H1 (cell line): ENCODE measurements at regions of chr5 and their contacts with region 1.

Region 1: DNA sequence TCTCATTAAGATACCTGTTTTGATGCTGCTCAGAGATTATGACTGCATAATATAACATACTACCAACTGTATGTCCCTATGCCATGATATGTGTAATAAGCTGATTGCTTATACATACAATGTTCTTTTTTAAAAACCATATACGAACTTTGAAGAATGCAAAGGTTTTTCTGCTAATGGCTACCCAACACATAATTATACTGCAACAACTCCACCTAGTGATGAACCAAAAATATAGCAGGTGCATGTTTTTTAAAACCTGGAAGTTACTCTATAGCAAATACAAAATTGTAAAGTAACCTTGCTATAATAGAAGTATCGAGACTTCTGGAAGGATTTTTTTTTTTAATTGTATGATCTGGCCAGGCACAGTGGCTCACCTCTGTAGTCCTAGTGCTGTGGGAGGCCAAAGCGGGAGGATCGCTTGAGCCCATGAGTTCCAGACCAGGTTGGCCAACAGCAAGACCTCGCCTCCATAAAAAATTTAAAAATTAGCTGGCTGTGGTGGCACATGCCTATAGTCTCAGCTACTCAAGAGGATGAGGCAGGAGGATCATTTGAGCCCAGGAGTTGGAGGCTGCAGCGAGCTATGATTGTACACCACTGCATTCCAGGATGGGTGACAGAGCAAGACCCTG is 49.1 kb downstream of the HOMER1 start:
- DNase-seq: no peak
- H3K4me3 ChIP-seq: no peak overlapping the region
- H3K27ac ChIP-seq: no peak overlapping the region
- H3K4me1 ChIP-seq: peaks cover 0 to 7% (median 2%) of the 10 kb centered on the region in 4 experiments; a peak in 4 of 7 replicates
- H3K27me3 ChIP-seq: no peaks in the 10 kb centered on the region
- CTCF ChIP-seq: peak in 2 of 3 experiments; percentile 29 to 50; a peak in 2 of 4 replicates
- EP300 ChIP-seq: no peak
- POLR2A ChIP-seq: no peak
- RAD21 ChIP-seq: peak; percentile 67 to 71

Region 2: DNA sequence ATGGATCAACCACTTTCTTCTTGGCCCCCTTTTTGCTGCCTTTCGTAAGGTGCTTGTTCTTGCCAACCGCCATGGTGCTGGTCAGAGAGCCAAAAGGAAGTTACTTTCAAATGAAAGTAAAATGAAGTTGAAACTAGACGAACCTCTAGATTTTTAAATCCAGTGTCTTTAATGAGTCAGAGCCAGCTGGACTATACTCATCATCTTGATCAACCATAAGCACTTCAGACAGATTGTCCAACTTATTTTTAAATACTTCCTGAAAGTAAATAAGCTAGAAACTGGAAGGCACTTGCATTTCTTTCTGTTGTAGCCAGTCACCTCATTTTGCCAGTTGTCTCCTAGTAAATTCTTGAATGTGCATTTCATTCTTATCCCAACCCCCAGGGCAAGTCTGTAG is 180.0 kb before region 1 on chr5:
- CTCF ChIA-PET with region 1: no interaction called
- POLR2A ChIA-PET with region 1: no interaction called
- DNase-seq: no peak
- H3K4me3 ChIP-seq: no peak overlapping the region
- H3K27ac ChIP-seq: no peak overlapping the region
- H3K4me1 ChIP-seq: no peaks in the 10 kb centered on the region
- H3K27me3 ChIP-seq: no peaks in the 10 kb centered on the region
- CTCF ChIP-seq: no peak
- EP300 ChIP-seq: no peak
- POLR2A ChIP-seq: no peak
- RAD21 ChIP-seq: no peak

Region 3: GRCh38 chr5:79448336-79448735 is 16.5 kb before region 1 on chr5:
- CTCF ChIA-PET with region 1: interaction called, 15 read pairs
- POLR2A ChIA-PET with region 1: interaction called, 4 read pairs
- DNase-seq: no peak
- H3K4me3 ChIP-seq: no peak overlapping the region
- H3K27ac ChIP-seq: no peak overlapping the region
- H3K4me1 ChIP-seq: no peaks in the 10 kb centered on the region
- H3K27me3 ChIP-seq: no peaks in the 10 kb centered on the region
- CTCF ChIP-seq: no peak
- EP300 ChIP-seq: no peak
- POLR2A ChIP-seq: no peak
- RAD21 ChIP-seq: no peak

Region 4: DNA sequence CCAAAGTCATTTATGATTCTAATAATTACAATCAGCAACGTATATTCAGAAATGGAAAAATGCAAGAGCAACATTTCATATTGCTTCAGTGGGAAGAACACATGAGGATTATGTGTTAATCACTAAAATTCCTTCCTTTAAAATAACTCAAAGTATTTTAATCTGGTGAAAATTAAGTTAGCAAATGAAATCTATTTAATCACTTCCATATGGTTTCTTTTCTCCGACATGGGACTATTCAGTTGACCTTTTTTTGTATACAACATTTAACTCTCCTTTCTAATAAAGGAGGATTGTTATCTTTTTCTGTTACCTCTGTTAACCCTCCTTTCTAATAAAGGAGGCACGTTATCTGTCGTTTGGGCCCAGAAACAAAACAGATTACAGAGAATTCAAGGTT is 10.8 kb before region 1 on chr5:
- CTCF ChIA-PET with region 1: interaction called, 15 read pairs
- POLR2A ChIA-PET with region 1: interaction called, 4 read pairs
- DNase-seq: no peak
- H3K4me3 ChIP-seq: no peak overlapping the region
- H3K27ac ChIP-seq: no peak overlapping the region
- H3K4me1 ChIP-seq: no peaks in the 10 kb centered on the region
- H3K27me3 ChIP-seq: no peaks in the 10 kb centered on the region
- CTCF ChIP-seq: no peak
- EP300 ChIP-seq: no peak
- POLR2A ChIP-seq: no peak
- RAD21 ChIP-seq: no peak

Region 5: DNA sequence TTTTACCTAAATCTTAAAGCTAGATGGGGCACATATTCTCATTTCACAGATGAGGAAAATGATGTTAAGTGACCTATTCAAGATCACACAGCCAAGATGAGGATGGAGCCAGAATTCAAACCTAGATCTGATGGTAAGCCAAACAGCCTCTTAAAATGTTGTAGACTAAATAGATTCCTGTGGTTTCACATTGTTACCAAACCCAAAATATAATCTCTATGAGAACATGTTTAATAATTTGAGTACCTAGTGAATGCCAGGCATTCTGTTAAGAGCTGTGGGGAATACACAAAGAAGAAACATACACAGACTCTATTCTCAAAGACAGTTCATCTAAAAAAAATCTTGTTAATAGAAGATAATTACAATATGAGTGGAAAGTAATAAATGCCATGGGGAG is 24.0 kb after region 1 on chr5:
- CTCF ChIA-PET with region 1: interaction called, 18 read pairs
- POLR2A ChIA-PET with region 1: interaction called, 5 read pairs
- DNase-seq: no peak
- H3K4me3 ChIP-seq: no peak overlapping the region
- H3K27ac ChIP-seq: no peak overlapping the region
- H3K4me1 ChIP-seq: peaks cover 0 to 7% (median 5%) of the 10 kb centered on the region in 4 experiments; a peak in 4 of 7 replicates
- H3K27me3 ChIP-seq: no peaks in the 10 kb centered on the region
- CTCF ChIP-seq: no peak
- EP300 ChIP-seq: no peak
- POLR2A ChIP-seq: no peak
- RAD21 ChIP-seq: no peak